ENCODE measurements at regions of chr12 and their contacts with region 1.

Region 1: DNA sequence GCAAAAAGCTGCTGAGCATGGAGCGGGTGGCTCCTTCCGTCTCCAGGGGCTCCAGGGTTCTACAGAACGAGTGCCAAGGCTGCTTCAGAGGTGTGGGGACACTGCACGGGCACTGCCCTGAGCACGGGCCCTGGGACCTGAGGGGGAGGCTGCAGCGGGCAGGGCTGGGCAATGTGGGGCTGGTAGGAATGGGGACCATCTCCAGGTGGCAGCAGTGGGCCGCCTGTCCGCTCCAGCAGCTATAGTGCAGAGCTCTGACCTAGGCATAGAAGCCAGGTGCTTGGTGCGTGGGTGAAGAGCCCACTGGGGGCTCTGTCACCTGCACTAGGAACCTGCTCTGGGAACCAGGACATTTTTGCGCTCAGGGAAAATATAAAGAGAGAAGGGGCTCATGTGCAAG is 22.3 kb downstream of the HDAC7 start:
- DNase-seq: peak; percentile 61
- ATAC-seq: peak; percentile 72
- H3K4me3 Mint-ChIP-seq: no peak overlapping the region
- H3K27ac Mint-ChIP-seq: peak overlapping the region; percentile 66
- H3K4me1 Mint-ChIP-seq: peaks cover 29% of the 10 kb centered on the region
- H3K27me3 Mint-ChIP-seq: no peaks in the 10 kb centered on the region

Region 2: DNA sequence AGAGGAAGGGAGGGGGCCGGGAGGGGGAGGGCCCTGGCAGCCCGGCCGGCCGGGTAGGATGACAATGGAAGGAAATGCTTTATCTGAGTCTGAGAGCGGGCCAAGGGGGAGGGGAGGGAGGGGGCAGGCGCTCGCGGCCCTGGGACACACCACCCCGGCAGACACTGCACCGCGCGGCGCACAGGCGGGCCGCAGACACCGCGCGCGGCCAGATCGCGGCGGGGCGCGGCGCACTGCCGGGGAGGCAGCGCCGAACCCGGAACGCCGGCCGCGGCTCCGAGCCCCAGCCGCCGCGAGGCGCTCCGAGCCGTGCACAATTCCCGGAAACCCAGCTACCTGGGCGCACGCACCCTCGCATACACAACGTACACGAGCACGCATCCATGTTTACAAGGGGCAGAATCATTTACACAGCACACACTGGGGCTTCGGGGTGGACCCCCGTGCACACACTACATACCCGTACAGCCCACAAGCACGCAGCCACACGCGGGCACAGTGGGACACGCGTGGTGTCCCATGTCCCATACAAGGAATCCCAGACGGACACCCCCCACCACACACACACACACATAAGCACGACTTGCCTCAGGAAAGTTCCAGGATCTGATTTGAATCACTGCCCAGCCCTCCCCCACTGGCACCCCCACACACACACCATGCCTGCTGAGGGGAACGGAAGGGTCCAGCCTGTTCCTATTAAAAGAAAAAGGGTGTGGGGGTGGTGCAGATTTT is 22.6 kb after region 1 on chr12 and contains the start of gene HDAC7:
- CTCF ChIA-PET with region 1: interaction called, 775 read pairs
- DNase-seq: peak; percentile 85
- ATAC-seq: peak; percentile 52
- H3K4me3 Mint-ChIP-seq: peak within 1 kb of the TSS; percentile 97
- H3K27ac Mint-ChIP-seq: peak within 1 kb of the TSS; percentile 96
- H3K4me1 Mint-ChIP-seq: peaks cover 61% of the 10 kb centered on the region
- H3K27me3 Mint-ChIP-seq: no peaks in the 10 kb centered on the region
- total RNA-seq, gene HDAC7: 226 to 284 TPM

Region 3: DNA sequence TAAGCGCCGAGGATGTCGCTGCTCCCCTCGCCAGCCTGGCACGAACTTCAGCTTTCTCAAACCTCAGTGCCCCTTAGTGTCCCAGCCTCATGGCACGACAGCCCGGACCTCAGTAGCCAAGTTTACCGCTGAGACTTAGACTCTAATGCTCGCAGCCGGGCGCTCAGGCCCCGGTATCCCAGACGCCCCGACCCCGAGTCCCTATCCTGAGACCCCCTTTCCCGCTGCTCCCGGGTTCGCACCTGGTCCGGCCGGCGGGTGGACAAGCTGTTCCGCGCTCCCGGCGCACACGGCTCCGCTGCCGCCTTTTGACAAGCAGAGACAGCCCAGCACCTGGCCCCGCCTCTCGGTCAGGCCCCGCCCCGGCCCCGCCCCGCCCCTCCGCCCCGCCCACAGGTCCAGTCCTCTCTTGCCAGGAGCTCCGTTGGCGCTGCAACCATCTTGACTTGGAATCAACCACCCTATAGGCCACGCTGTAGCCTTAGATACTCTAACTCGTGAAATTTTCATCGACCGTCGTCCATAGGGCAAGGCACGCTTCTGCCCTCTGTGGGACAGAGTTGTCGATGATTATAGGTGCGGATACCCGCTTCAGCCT is 107.4 kb after region 1 on chr12 and contains the start of gene VDR:
- CTCF ChIA-PET with region 1: no interaction called
- DNase-seq: peak; percentile 85
- ATAC-seq: peak; percentile 78
- H3K4me3 Mint-ChIP-seq: peak within 1 kb of the TSS; percentile 85
- H3K27ac Mint-ChIP-seq: peak within 1 kb of the TSS; percentile 86
- H3K4me1 Mint-ChIP-seq: peaks cover 43% of the 10 kb centered on the region
- H3K27me3 Mint-ChIP-seq: peaks cover 34% of the 10 kb centered on the region
- total RNA-seq, gene VDR: 34.9 to 69.8 TPM

Measured in activated CD8-positive, alpha-beta memory T cell treated with anti-CD3 and anti-CD28 coated beads, Interleukin-2, amount 10 ng/mL, durations not matched to agents 7 days and 5 days (primary cell).